IMR-90 (cell line): ENCODE measurements at regions of chr2 and their contacts with region 1.

Region 1: GRCh38 chr2:63124208-63124607 is 73.6 kb downstream of the OTX1 start:
- DNase-seq: no peak
- ATAC-seq: no peak
- H3K4me3 ChIP-seq: no peak overlapping the region
- H3K27ac ChIP-seq: no peak overlapping the region
- H3K4me1 ChIP-seq: no peaks in the 10 kb centered on the region
- H3K27me3 ChIP-seq: no peaks in the 10 kb centered on the region
- CTCF ChIP-seq: no peak
- POLR2A ChIP-seq: no peak
- RAD21 ChIP-seq: no peak

Region 2: DNA sequence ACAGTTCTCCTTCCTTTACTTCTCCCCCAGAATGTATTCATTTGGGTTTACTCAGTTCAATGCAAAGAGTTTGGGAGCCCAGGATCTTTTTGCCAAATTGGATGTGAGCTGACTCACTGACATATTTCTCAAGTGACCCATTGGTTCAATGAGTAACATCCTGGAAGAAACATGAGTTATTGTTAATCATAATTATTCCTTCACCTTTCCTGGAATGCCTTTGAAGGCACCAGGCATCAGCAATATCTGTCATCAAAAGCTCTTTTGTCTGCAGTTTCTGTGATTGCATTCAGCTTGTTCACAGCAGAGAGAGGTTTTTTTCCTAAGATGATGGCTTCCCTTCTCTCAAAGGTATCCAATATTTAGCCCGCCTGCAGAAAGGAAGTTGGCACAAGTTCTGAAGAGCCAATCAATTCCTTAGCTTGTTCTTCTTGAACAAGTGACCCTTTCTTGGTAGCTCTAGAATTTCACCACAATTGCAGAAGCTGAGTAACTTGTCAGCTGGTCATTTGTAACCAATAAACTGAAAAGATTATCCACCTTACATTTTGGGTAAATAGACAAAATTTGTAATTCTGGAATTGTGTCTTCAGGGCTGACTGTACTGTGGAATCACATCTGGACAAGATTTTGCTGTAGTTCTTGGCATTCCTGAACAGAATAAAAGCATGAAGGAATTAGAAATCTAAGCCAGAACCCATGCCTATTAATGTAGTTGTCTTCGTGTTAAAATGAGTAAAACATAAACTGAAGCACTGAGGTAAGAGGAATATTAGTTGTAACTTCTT is 546.0 kb before region 1 on chr2:
- CTCF ChIA-PET with region 1: no interaction called
- POLR2A ChIA-PET with region 1: no interaction called
- dilution Hi-C with region 1: no loop called
- in situ Hi-C with region 1: no loop called
- intact Hi-C with region 1: no loop called
- DNase-seq: peak; percentile 92
- ATAC-seq: peak; percentile 51
- H3K4me3 ChIP-seq: no peak overlapping the region
- H3K27ac ChIP-seq: peak overlapping the region; percentile 90
- H3K4me1 ChIP-seq: peaks cover 22% of the 10 kb centered on the region
- H3K27me3 ChIP-seq: no peaks in the 10 kb centered on the region
- CTCF ChIP-seq: no peak
- POLR2A ChIP-seq: no peak
- RAD21 ChIP-seq: no peak

Region 3: DNA sequence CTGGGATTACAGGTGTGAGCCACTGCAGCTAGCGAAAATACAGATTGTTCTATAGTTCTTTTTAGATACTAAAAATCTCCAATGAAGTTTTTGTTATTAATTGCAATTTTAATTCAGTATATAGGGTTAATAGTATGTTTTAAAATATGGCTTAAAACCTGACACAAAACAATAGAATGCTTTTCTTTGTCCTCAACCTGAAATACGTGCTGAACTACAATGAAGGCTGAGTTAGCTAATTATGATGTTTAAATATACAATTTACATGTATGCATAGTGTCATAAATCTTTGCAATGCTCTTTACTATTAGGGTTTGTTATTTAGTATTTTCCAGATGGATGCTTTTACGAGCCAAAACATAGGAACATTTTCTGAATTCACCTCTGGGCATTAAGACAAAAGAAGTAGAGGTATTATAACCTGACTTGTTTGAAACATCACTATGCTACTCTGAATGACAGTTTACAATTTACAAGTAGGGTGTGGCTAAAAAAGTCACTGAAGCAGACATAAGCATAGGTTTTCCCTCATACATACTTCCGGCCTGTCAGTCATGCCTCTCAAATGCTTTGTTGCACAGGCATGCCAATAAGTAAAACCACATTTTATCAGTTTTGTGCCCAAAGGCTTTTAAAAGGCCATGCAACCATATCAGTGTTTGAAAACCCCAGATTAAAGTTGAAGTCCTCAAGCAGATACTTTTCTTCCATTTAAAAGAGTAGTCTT is 94.8 kb after region 1 on chr2:
- CTCF ChIA-PET with region 1: no interaction called
- POLR2A ChIA-PET with region 1: no interaction called
- dilution Hi-C with region 1: no loop called
- in situ Hi-C with region 1: loop called (anchors 25 kb)
- intact Hi-C with region 1: no loop called
- DNase-seq: no peak
- ATAC-seq: no peak
- H3K4me3 ChIP-seq: no peak overlapping the region
- H3K27ac ChIP-seq: no peak overlapping the region
- H3K4me1 ChIP-seq: no peaks in the 10 kb centered on the region
- H3K27me3 ChIP-seq: no peaks in the 10 kb centered on the region
- CTCF ChIP-seq: no peak
- POLR2A ChIP-seq: no peak
- RAD21 ChIP-seq: no peak